Activated T-helper 2 cell treated with anti-CD3 and anti-CD28 coated beads, Interferon-gamma antibody, Interleukin-2, Interleukin-4, amounts not matched to agents 10 μg/mL and 5 μg/mL and 100 μg/mL, durations not matched to agents 14 hours and 24 hours and 36 hours (primary cell): ENCODE measurements at regions of chr1 and their contacts with region 1.

Region 1: DNA sequence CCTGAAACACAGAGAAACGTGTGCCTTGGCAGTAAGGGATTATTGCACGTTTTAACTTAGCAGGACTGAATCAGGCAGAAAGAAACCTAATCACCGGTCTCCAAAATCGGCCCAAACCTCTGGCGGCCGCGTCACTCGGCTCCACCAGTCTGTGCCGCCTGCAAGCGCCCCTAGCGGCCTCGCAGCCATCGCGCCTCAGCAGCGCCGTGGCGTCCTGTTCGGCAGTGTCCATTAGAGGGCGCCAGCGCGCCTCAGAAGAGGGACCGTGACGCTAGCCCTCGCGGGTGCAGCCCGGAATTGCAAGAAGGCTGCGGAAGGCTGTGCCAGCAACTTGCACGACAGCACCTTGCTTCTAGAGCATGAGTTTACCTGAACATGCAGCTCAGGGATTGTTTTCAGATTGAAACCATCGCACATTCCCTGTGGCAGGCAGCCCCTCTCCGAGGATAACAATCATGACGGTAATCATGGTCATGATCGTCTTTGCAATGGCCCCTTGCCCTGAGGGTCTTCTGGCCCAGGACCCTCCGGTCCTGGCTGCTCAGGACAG is 164.4 kb downstream of the TRIM33 start:
- DNase-seq: peak; percentile 97
- H3K4me3 Mint-ChIP-seq: peak overlapping the region; percentile 89
- H3K27ac Mint-ChIP-seq: peak overlapping the region; percentile 94
- H3K4me1 Mint-ChIP-seq: peaks cover 13% of the 10 kb centered on the region
- H3K27me3 Mint-ChIP-seq: no peaks in the 10 kb centered on the region

Region 2: DNA sequence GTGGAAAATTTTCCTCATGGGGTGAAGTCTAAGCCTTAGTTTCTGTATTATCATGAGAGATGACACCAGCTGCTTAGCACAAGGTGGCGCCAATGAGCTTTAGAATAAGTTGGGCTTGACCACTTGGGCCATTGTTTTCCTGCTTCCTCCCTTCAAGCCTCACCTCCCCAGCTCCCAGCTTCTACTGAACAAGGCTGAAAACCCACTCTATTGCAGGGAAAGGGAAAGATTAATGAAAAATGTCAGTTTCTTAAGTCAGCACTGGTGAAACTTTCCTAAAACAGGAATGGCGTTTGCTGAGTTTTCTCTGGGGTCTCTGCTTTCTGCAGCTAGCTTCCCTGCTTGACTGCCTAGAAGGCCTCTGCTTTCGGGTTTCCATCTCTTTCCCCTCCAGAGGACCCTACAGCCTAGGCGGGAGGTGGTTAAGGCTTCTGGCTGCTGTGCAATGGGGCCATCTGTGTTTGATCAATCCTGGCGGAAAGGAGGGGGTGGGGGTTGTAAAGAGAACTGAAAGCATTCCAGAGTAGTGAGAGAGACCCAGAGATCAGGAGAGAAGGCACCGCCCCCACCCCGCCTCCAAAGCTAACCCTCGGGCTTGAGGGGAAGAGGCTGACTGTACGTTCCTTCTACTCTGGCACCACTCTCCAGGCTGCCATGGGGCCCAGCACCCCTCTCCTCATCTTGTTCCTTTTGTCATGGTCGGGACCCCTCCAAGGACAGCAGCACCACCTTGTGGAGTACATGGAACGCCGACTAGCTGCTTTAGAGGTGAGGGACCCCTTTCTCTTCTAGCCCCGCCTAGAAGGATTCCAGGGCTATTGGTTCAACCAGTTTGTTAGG is 367.5 kb before region 1 on chr1 and contains the start of gene OLFML3:
- intact Hi-C with region 1: loop called (anchors 1 kb)
- DNase-seq: no peak
- H3K4me3 Mint-ChIP-seq: no peak within 1 kb of the TSS
- H3K27ac Mint-ChIP-seq: peak within 1 kb of the TSS; percentile 32
- H3K4me1 Mint-ChIP-seq: peaks cover 39% of the 10 kb centered on the region
- H3K27me3 Mint-ChIP-seq: no peaks in the 10 kb centered on the region
- total RNA-seq, gene OLFML3: 0.11 and 0.18 TPM in 2 replicates

Region 3: GRCh38 chr1:114263343-114263742 is 83.2 kb before region 1 on chr1:
- intact Hi-C with region 1: no loop called
- DNase-seq: no peak
- H3K4me3 Mint-ChIP-seq: no peak overlapping the region
- H3K27ac Mint-ChIP-seq: no peak overlapping the region
- H3K4me1 Mint-ChIP-seq: no peaks in the 10 kb centered on the region
- H3K27me3 Mint-ChIP-seq: peaks cover 8% of the 10 kb centered on the region

Region 4: GRCh38 chr1:114446198-114446597 is 99.6 kb after region 1 on chr1:
- intact Hi-C with region 1: no loop called
- DNase-seq: no peak
- H3K4me3 Mint-ChIP-seq: no peak overlapping the region
- H3K27ac Mint-ChIP-seq: no peak overlapping the region
- H3K4me1 Mint-ChIP-seq: peaks cover 12% of the 10 kb centered on the region
- H3K27me3 Mint-ChIP-seq: no peaks in the 10 kb centered on the region

Region 5: GRCh38 chr1:114490274-114490693 is 143.7 kb after region 1 on chr1:
- intact Hi-C with region 1: no loop called
- DNase-seq: no peak
- H3K4me3 Mint-ChIP-seq: no peak overlapping the region
- H3K27ac Mint-ChIP-seq: no peak overlapping the region
- H3K4me1 Mint-ChIP-seq: peaks cover 32% of the 10 kb centered on the region
- H3K27me3 Mint-ChIP-seq: no peaks in the 10 kb centered on the region

Region 6: DNA sequence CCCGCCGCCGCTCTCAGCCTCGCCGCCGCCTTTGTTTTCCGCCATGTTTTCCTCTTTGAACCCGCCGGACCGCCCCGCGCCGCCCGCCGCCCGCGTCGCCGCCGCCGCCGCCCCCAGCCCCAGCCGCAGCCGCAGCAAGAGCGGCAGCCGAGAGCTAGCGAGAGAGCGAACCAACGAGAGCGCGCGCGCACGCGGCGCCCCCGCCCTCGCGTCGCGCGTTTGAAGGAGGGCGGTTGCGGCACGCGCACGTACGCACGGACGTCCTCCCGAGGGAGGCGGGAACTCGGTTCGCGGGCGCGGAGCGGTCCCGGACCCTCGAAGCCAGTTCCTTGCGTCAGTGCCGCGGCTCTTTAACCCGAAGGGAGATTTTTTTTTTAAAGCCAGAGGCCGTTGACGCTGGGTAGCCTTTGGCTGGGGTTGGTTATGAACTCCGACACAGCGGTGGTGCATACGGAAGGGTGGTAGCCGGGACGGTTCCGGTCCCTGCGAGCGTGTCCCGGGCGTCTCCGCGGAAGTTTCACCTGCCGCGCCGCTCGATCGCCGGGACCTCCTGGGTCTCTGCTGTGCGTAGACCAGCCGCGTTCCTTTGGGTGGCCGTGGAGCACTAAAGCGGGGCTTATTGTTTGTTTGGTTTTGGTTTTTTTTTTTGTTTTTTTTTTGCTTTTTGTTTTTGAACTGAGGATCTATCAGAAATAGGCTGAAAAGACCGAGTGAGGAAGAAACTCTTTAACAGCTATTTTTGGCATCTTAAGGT is 164.7 kb after region 1 on chr1 and contains the start of gene TRIM33:
- intact Hi-C with region 1: loop called (anchors 2 kb)
- DNase-seq: peak; percentile 91
- H3K4me3 Mint-ChIP-seq: peak within 1 kb of the TSS; percentile 88
- H3K27ac Mint-ChIP-seq: peak within 1 kb of the TSS; percentile 97
- H3K4me1 Mint-ChIP-seq: peaks cover 41% of the 10 kb centered on the region
- H3K27me3 Mint-ChIP-seq: no peaks in the 10 kb centered on the region
- total RNA-seq, gene TRIM33: 41.5 and 44.7 TPM in 2 replicates

Region 7: DNA sequence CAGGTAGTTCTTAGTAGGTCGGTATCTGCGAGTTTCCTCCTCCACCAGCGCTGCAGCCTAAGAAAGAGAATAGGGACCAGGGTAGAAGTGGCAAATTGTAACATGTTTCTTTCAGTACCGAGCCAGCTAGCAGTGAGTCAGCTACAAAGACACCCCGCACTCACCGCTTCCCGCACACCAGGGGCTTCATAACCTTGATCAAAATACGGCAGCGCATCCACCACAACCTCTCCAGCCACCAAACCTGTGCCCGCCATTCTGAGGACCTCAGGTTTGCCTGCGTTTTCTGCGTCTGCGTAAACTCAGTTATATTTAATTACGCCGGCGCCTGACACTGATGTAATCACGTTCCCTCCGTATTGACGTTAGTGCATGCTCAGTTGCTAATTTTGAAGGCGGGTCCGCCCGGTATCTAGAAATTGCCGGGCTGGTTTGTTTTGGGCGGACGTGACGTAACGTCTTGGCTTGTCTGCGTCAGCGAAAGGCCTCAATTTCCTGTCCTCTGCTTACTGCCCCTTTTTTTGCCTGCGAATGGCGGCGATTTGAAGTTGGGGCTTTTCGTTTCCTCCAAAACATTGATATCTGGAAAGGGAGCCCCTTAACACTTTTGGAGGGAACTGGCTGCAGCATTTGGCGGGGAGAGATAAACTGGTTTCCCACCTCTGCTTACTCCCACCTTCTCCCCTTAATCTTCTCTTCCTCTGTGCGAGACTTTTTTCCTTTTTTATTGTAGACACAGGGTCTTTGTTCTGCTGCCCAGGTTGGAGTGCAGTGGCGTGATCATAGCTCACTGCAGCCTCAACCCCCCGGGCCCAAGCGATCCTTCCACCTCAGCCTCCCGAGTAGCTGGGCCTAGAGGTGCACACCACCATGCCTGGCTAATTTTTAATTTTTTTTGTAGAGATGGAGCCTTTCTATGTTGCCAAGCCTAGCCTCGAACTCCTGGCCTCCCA is 235.1 kb after region 1 on chr1 and contains the start of gene BCAS2:
- intact Hi-C with region 1: loop called (anchors 1 kb)
- DNase-seq: peak; percentile 95
- H3K4me3 Mint-ChIP-seq: peak within 1 kb of the TSS; percentile 95
- H3K27ac Mint-ChIP-seq: peak within 1 kb of the TSS; percentile 97
- H3K4me1 Mint-ChIP-seq: peaks cover 17% of the 10 kb centered on the region
- H3K27me3 Mint-ChIP-seq: peaks cover 2% of the 10 kb centered on the region
- total RNA-seq, gene BCAS2: 52.1 and 54.1 TPM in 2 replicates

Region 8: GRCh38 chr1:114716304-114717170 is 370.0 kb after region 1 on chr1 and contains the start of gene NRAS:
- intact Hi-C with region 1: loop called (anchors 10 kb)
- DNase-seq: peak; percentile 92
- H3K4me3 Mint-ChIP-seq: peak within 1 kb of the TSS; percentile 95
- H3K27ac Mint-ChIP-seq: peak within 1 kb of the TSS; percentile 93
- H3K4me1 Mint-ChIP-seq: peaks cover 26% of the 10 kb centered on the region
- H3K27me3 Mint-ChIP-seq: no peaks in the 10 kb centered on the region
- total RNA-seq, gene NRAS: 63.3 and 64.5 TPM in 2 replicates